ENCODE measurements at regions of chr17 and their contacts with region 1.

Region 1: DNA sequence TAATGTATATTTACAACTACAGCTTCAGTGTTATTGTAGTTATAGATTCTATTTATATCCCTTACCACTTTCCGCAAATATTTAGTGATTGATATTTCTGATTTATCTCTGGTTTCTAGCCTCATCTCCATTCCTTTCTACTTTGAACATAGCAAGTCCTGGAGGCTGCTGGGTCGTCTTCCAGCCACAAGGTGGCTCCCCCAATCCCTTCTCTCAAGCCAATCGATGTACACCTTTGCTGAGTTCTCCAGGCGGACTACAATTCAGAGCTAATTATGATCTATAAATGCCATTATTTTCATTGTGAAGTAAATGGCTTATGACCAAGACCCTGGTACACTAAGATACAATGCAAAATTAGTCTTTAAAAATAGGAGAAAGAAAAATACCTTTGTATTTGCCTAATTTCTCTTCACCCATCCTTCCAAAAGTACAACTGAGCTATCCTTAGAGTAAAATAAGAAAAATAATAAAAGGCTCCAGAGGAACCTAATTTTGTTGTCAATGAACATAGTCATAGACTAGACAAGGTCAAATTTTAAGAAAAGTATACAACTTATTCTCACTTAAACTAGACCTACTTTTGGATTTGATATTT is 122.1 kb downstream of the SKAP1 start:
- DNase-seq: peak in 1 of 2 experiments; percentile 15
- H3K4me3 ChIP-seq: no peak overlapping the region
- H3K27ac ChIP-seq: no peak overlapping the region
- H3K4me1 ChIP-seq: no peaks in the 10 kb centered on the region
- H3K27me3 ChIP-seq: no peaks in the 10 kb centered on the region; a peak in 2 of 7 replicates
- CTCF ChIP-seq: peak; percentile 78 to 87 (median 81)
- EP300 ChIP-seq: no peak
- POLR2A ChIP-seq: no peak
- RAD21 ChIP-seq: peak; percentile 58 to 69

Region 2: GRCh38 chr17:48202959-48203358 is 105.0 kb before region 1 on chr17:
- CTCF ChIA-PET with region 1: no interaction called
- POLR2A ChIA-PET with region 1: no interaction called
- DNase-seq: no peak
- H3K4me3 ChIP-seq: no peak overlapping the region
- H3K27ac ChIP-seq: no peak overlapping the region
- H3K4me1 ChIP-seq: no peaks in the 10 kb centered on the region
- H3K27me3 ChIP-seq: no peaks in the 10 kb centered on the region
- CTCF ChIP-seq: no peak
- EP300 ChIP-seq: no peak
- POLR2A ChIP-seq: no peak
- RAD21 ChIP-seq: no peak

Region 3: GRCh38 chr17:48295362-48296288 is 12.3 kb before region 1 on chr17:
- CTCF ChIA-PET with region 1: interaction called, 24 read pairs
- POLR2A ChIA-PET with region 1: no interaction called
- DNase-seq: no peak
- H3K4me3 ChIP-seq: no peak overlapping the region
- H3K27ac ChIP-seq: no peak overlapping the region
- H3K4me1 ChIP-seq: no peaks in the 10 kb centered on the region
- H3K27me3 ChIP-seq: no peaks in the 10 kb centered on the region; a peak in 1 of 7 replicates
- CTCF ChIP-seq: no peak
- EP300 ChIP-seq: no peak
- POLR2A ChIP-seq: no peak
- RAD21 ChIP-seq: no peak

Region 4: GRCh38 chr17:48322060-48322459 is 14.1 kb after region 1 on chr17:
- CTCF ChIA-PET with region 1: interaction called, 15 read pairs
- POLR2A ChIA-PET with region 1: no interaction called
- DNase-seq: no peak
- H3K4me3 ChIP-seq: no peak overlapping the region
- H3K27ac ChIP-seq: no peak overlapping the region
- H3K4me1 ChIP-seq: no peaks in the 10 kb centered on the region
- H3K27me3 ChIP-seq: no peaks in the 10 kb centered on the region
- CTCF ChIP-seq: no peak
- EP300 ChIP-seq: no peak
- POLR2A ChIP-seq: no peak
- RAD21 ChIP-seq: no peak

Region 5: GRCh38 chr17:48382989-48383388 is 75.1 kb after region 1 on chr17:
- CTCF ChIA-PET with region 1: no interaction called
- POLR2A ChIA-PET with region 1: no interaction called
- DNase-seq: no peak
- H3K4me3 ChIP-seq: no peak overlapping the region
- H3K27ac ChIP-seq: no peak overlapping the region
- H3K4me1 ChIP-seq: no peaks in the 10 kb centered on the region
- H3K27me3 ChIP-seq: no peaks in the 10 kb centered on the region; a peak in 1 of 7 replicates
- CTCF ChIP-seq: no peak
- EP300 ChIP-seq: no peak
- POLR2A ChIP-seq: no peak
- RAD21 ChIP-seq: no peak

Measured in H1 (cell line).